ENCODE measurements at regions of chr20 and their contacts with region 1.

Region 1: GRCh38 chr20:2172305-2173175 is 70.9 kb downstream of the STK35 start:
- DNase-seq: peak; percentile 37 to 61
- ATAC-seq: peak; percentile 79 to 90
- H3K4me3 ChIP-seq: no peak overlapping the region
- H3K27ac ChIP-seq: no peak overlapping the region
- H3K4me1 ChIP-seq: no peaks in the 10 kb centered on the region
- H3K27me3 ChIP-seq: no peaks in the 10 kb centered on the region
- CTCF ChIP-seq: peak; percentile 84 to 90 (median 89)
- POLR2A ChIP-seq: no peak

Region 2: DNA sequence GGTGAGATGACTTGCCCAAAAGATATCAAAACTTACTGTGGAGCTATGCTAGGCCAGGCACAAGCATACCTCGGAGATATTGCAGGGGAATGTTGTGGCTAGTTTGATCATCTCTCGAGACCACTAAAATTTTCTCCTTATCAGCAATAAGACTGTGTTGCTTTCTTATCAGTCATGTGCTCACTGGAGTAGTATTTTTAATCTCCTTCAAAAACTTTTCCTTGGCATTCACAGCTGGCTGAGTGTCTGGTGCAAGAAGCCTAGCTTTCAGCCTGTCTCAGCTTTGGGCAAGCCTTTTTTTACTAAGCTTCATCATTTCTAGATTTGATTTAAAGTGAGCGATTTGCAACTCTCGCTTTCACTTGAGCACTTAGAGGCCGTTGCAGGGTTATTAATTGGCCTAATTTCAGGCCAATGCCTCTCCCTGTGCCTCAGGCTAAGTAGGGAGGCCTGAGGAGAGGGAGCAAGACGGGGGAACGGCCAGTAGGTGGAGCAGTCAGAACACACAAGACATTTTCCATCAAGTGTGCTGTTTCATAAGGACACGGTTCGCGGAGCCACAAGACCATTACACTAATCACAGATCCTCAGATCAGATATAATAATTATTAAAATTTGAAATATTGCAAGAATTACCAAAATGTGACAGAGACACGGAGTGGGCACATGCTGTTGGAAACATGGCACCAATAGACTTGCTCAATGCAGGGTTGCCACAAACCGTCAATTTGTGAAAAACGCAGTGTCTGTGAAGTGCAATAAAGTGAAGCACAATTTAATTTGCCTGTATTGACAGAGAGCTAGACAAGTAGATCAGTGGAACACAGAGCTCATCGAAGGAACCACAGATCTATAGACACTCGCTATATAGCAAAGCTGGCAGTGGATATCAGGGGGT is 408.2 kb before region 1 on chr20:
- in situ Hi-C with region 1: loop called in 3 of 4 experiments (anchors 10 to 25 kb)
- intact Hi-C with region 1: loop called (anchors 2 kb)
- DNase-seq: peak; percentile 40 to 56
- ATAC-seq: peak; percentile 78 to 89
- H3K4me3 ChIP-seq: no peak overlapping the region
- H3K27ac ChIP-seq: no peak overlapping the region
- H3K4me1 ChIP-seq: no peaks in the 10 kb centered on the region
- H3K27me3 ChIP-seq: no peaks in the 10 kb centered on the region
- CTCF ChIP-seq: peak; percentile 26 to 73 (median 64)
- POLR2A ChIP-seq: no peak

Region 3: GRCh38 chr20:1776681-1777475 is 395.7 kb before region 1 on chr20:
- in situ Hi-C with region 1: loop called in 3 of 4 experiments (anchors 10 to 25 kb)
- intact Hi-C with region 1: no loop called
- DNase-seq: peak; percentile 58 to 79
- ATAC-seq: peak; percentile 98 to 99
- H3K4me3 ChIP-seq: peak overlapping the region; percentile 57 to 92 (median 67)
- H3K27ac ChIP-seq: peak overlapping the region in 2 of 4 donors; percentile 37 to 68
- H3K4me1 ChIP-seq: peaks cover 6 to 10% of the 10 kb centered on the region in 2 donors
- H3K27me3 ChIP-seq: no peaks in the 10 kb centered on the region
- CTCF ChIP-seq: peak; percentile 54 to 86 (median 76)
- POLR2A ChIP-seq: no peak

Region 4: DNA sequence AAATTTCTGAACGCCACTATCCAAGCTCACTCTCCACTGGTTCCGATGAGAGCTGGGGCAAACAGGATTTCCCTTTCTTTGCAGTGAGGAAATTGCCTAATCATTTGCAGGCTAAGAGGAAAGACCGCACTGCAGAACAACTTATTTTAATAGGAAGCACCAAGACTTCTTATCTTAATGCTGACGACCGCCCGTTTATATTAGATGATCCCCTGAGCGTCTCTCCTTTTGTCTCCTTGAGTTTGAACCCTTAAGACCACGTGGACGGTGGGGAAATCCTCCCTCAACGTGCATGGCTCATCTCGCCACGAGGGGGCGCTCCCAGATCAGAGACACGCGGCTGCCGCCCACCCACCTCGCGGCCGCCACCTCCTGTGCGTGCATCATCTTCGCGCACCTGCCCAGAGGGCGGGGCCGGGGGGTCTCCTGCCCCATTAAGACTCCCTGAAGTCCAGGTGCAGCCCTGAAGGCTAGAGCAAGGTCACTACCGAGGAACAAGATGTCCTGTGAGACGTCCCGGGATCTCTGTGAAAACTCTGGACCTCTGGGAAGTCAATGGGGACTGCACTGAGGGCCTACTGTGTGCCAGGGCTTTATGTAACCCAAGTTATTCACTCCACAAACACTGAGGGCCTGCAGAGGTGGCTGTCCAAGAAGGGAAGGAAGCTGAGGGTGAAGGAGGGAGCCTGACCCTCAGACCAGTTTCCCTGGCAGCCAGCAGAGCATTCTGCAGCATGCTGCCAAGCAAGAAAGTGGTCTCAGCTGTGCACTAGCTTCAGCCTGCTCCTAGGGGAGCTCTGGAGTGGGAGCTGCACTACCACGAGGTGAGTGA is 206.8 kb before region 1 on chr20:
- in situ Hi-C with region 1: loop called (anchors 5 kb)
- intact Hi-C with region 1: loop called (anchors 1 kb)
- DNase-seq: peak in 1 of 2 donors; percentile 52
- ATAC-seq: peak; percentile 50 to 66
- H3K4me3 ChIP-seq: peak overlapping the region in 1 of 4 donors; percentile 1
- H3K27ac ChIP-seq: no peak overlapping the region
- H3K4me1 ChIP-seq: peaks cover 6% of the 10 kb centered on the region in 2 donors
- H3K27me3 ChIP-seq: no peaks in the 10 kb centered on the region
- CTCF ChIP-seq: peak; percentile 72 to 93 (median 91)
- POLR2A ChIP-seq: no peak

Region 5: GRCh38 chr20:2005831-2006426 is 166.6 kb before region 1 on chr20:
- in situ Hi-C with region 1: no loop called
- intact Hi-C with region 1: loop called (anchors 1 kb)
- DNase-seq: no peak
- ATAC-seq: no peak
- H3K4me3 ChIP-seq: no peak overlapping the region
- H3K27ac ChIP-seq: no peak overlapping the region
- H3K4me1 ChIP-seq: no peaks in the 10 kb centered on the region
- H3K27me3 ChIP-seq: peaks cover 0 to 2% (median 0%) of the 10 kb centered on the region in 3 donors
- CTCF ChIP-seq: no peak
- POLR2A ChIP-seq: no peak

Region 6: DNA sequence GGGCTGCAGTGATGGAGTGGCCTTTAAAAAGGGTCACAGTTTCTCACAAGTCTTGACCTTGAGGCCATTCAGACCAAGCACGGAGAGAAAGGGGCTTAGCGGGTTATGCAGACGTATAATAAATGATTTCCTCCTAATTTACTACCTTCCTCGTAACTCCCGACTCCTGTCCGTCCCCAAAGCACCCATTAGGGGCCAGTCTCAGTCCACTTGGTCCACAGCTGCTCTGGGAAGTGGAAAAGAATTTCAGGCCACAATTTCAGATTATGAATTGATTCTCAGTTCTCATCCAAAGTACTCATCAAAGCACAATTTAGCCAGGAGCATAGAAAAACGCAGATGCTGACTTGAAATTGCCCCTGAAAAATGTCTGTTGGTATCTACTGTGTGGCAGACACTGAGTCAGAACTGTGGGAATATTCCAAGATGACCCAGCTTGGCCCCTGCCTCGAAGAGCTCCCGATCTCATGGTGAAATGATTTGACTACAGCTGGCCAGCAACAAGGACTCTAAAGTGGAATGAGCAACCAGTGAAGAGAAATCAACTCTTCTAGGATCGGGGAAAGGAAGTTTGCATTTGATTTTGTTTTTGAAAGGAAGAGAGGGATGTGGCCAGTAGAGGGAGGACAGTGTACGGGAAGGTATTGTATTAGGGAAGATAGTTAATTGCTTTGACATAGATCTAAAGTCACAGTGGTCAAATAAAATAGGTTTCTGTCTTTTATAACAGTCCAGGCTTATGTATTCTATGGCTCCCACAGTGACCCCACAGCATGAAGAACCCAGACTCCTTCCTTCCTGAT is 86.2 kb before region 1 on chr20:
- in situ Hi-C with region 1: loop called in 2 of 4 experiments (anchors 10 kb)
- intact Hi-C with region 1: loop called (anchors 2 kb)
- DNase-seq: no peak
- ATAC-seq: no peak
- H3K4me3 ChIP-seq: no peak overlapping the region
- H3K27ac ChIP-seq: no peak overlapping the region
- H3K4me1 ChIP-seq: no peaks in the 10 kb centered on the region
- H3K27me3 ChIP-seq: peaks cover 0 to 9% (median 0%) of the 10 kb centered on the region in 3 donors
- CTCF ChIP-seq: no peak
- POLR2A ChIP-seq: no peak

Region 7: GRCh38 chr20:2114990-2115681 is 57.4 kb before region 1 on chr20:
- in situ Hi-C with region 1: no loop called
- intact Hi-C with region 1: no loop called
- DNase-seq: no peak
- ATAC-seq: peak in 1 of 2 donors; percentile 53
- H3K4me3 ChIP-seq: no peak overlapping the region
- H3K27ac ChIP-seq: peak overlapping the region; percentile 19 to 53 (median 35)
- H3K4me1 ChIP-seq: peaks cover 39 to 74% of the 10 kb centered on the region in 2 donors
- H3K27me3 ChIP-seq: no peaks in the 10 kb centered on the region
- CTCF ChIP-seq: no peak
- POLR2A ChIP-seq: no peak

Region 8: GRCh38 chr20:2195614-2196013 is 23.1 kb after region 1 on chr20:
- in situ Hi-C with region 1: no loop called
- intact Hi-C with region 1: no loop called
- DNase-seq: no peak
- ATAC-seq: no peak
- H3K4me3 ChIP-seq: no peak overlapping the region
- H3K27ac ChIP-seq: no peak overlapping the region
- H3K4me1 ChIP-seq: no peaks in the 10 kb centered on the region
- H3K27me3 ChIP-seq: no peaks in the 10 kb centered on the region
- CTCF ChIP-seq: no peak
- POLR2A ChIP-seq: no peak